ENCODE measurements at regions of chr11 and their contacts with region 1.

Region 1: DNA sequence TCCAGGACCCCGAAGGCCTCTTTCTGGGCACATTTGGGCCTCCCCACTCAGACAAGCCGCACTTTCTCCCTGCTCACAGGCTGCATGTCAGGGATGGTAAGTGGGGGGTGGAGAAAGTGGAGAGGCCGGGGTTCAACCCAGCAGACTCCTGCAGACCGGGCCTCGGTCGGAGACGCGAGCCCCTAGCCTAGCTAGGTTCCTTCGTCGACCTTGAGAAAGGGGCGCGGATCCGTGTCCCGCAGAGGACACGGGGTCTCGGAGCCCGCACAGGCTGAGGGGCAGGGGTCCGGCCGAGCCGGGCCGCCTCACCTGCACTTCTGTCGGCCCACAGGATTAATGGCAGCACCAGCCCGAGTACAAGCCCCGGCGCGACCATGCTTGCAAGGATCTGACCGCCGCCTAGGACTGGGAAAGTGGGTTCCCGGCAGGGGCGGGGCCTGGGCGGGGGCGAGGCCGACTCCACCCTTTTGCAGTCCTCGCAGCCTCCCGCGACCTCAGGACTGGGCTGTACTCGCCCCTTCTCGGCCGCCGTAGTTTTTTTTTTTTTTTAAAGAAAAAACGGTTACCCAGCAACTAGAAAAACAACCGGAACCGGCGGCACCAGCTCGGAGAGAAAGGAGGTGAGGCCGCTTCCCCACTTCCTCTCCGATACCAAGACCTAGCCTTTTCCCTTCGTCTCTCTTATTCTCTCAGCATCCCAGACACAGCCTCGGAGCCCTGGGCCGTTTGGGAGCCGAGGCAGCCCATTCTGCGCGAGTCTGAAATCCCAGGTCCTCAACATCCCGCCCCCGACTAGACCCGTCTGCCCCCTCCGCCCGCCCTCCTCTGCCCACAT is at the starts of genes SIAE and SPA17:
- DNase-seq: peak; percentile 90
- CTCF ChIP-seq: no peak

Region 2: GRCh38 chr11:124763156-124763947 is 89.8 kb after region 1 on chr11:
- in situ Hi-C with region 1: loop called (anchors 5 kb)
- DNase-seq: peak; percentile 69
- CTCF ChIP-seq: peak; percentile 86

Region 3: GRCh38 chr11:124837491-124837856 is 163.9 kb after region 1 on chr11:
- in situ Hi-C with region 1: loop called (anchors 25 kb)
- DNase-seq: peak; percentile 70
- CTCF ChIP-seq: peak; percentile 56